HEK293 (cell line): ENCODE measurements at regions of chr17 and their contacts with region 1.

Region 1: DNA sequence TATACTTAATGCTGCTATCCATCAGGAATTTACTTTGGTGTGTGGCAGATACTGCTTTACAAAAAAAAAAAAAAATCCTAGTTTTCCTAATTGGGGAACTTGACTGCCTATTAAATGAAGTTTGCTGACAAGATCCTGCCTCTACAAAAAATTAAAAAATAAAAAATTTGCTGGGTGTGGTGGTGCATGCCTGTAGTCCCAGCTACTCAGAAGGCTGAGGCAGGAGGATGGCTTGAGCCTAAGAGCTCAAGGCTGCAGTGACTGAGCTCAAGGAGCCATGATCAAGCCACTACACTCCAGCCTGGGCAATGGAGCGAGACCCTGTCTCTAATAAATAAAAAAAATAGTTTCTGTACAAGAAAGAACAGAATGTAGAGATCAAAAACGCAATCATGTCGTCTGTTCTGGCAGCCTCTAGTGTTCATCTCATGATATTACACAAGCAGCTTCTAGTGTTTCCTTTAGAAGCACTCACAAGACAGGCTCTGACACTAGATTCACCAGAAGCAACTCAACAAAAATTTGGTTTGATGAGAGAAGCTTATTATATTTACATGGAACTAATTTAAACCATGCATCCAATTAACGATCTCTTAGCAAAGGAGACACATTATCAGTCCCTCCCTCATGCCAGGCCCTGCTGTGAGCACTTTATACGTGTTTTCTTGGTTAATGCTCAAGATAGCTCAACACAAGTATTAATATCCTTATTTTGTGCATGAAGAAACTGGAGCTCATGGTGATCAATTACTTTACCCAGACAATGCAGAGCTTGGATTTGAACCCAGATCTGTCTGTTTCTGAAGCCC is 6.8 kb upstream of the KRTAP17-1 start:
- H3K4me3 ChIP-seq: no peak overlapping the region
- H3K27ac ChIP-seq: no peak overlapping the region
- H3K4me1 ChIP-seq: no peaks in the 10 kb centered on the region
- CTCF ChIP-seq: no peak; the same call in 1 of the 2 replicates

Region 2: DNA sequence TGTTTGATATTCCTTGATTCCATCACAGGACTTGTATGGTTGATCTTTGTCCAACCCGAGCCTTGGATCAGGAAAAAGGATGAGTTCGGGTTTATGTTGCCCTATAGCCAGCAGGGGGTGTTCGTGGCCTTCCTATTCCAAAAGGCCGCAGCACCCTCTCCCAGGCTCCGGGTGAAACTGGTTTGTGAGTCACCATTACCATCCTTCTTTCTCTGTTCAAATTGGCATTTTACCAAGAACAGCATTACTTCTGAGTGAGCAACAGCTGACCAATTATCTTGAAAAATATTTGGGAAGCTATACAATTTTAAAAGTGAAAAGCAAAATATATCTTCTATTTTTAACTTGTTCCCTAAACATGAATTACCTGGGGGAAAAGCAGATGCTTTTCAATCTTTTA is 412.9 kb before region 1 on chr17:
- CTCF ChIA-PET with region 1: interaction called, 19 read pairs
- POLR2A ChIA-PET with region 1: no interaction called
- H3K4me3 ChIP-seq: no peak overlapping the region
- H3K27ac ChIP-seq: no peak overlapping the region
- H3K4me1 ChIP-seq: peaks cover 6% of the 10 kb centered on the region; the same call in 1 of the 2 replicates
- CTCF ChIP-seq: peak; percentile 45; the same call in 1 of the 2 replicates

Region 3: DNA sequence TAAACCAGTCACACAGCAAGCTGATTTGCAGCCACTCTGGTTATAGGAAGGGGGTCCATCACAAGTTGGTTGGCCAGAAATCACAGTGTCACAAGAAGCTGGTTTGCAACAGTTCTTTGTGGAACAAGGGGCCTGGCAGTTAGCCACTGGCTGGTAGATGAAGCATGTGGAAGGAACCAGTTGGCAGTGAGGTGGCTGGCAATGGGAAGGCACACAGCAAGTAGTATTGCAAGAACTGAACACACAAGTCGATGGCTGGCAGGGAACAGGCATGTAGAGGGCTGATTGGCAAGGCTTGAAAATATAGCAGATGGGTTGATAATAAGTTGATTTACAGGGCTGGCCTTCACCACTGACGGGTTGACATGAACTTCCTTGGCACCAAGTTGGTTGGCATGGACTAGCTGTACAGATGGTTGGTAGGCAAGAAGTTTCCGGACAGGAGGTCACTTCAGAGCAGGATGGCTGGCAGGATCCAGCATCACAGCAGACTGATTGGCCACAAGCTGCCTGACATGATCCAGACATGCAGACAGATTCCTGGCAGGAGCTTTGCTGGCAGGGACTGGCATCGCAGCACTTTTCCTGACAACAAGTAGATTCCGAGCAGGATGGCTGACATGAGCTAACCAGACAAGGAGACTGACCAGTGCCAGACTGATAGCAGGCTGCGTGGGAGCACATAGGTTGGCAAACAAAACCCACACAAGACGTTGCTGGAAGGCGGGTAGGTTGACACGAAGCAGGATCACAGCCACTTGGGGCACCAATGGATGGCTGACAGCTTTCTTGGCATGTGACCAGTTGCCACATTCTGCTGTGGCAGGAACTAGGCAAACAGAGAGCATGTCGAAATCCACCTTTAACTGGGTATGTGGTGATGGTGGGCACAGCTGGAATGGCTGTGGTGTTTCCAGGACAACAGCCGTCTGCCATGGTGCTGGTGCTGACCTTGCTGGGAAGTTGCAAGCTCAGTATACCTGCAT is 20.1 kb before region 1 on chr17 and contains the start of gene KRTAP29-1:
- CTCF ChIA-PET with region 1: interaction called, 27 read pairs
- POLR2A ChIA-PET with region 1: no interaction called
- H3K4me3 ChIP-seq: no peak within 1 kb of the TSS
- H3K27ac ChIP-seq: no peak within 1 kb of the TSS
- H3K4me1 ChIP-seq: no peaks in the 10 kb centered on the region
- CTCF ChIP-seq: no peak

Region 4: GRCh38 chr17:41334425-41334824 is 12.1 kb after region 1 on chr17:
- CTCF ChIA-PET with region 1: interaction called, 19 read pairs
- POLR2A ChIA-PET with region 1: no interaction called
- H3K4me3 ChIP-seq: no peak overlapping the region
- H3K27ac ChIP-seq: no peak overlapping the region
- H3K4me1 ChIP-seq: no peaks in the 10 kb centered on the region
- CTCF ChIP-seq: no peak

Region 5: GRCh38 chr17:41347869-41348773 is 25.8 kb after region 1 on chr17:
- CTCF ChIA-PET with region 1: interaction called, 16 read pairs
- POLR2A ChIA-PET with region 1: no interaction called
- H3K4me3 ChIP-seq: no peak overlapping the region
- H3K27ac ChIP-seq: no peak overlapping the region
- H3K4me1 ChIP-seq: no peaks in the 10 kb centered on the region
- CTCF ChIP-seq: no peak

Region 6: DNA sequence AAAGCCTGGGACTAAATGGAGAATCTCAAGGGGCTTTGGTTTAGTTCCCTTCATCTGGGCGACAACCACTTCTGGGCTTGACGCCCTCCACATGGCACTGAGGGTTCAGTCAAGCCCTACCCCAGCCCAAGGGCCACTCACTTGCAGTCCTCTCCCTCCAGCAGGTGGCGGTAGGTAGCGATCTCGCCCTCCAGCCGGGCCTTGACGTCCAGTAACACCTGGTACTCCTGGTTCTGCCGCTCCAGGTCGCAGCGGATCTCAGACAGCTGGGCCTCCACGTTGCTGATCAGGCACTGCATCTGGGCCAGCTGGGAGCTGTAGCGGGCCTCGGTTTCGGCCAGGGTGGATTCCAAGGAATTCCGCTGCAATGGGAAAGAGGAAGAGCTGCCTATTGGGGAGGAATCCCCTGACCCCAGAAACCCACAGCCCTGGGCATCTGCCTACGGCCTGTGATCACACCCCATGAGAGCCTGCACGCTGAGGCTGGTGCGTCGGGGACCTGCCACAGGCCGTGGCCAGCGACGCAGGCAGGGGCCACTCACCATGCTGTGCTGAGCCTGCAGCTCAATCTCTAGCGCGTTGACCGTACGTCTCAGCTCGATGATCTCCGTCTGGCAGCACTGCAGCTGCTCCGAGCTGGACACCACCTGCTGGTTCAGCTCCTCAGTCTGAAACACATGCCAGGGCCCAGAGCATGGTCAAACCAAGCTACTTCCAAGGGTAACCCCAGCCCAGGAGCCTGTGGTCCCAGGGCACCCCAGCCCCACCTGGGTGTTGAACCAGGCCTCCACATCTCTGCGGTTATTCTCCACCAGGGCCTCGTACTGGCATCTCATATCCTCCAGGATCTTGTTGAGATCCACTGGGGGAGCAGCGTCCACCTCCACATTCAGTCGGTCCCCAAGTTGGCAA is 164.8 kb after region 1 on chr17:
- CTCF ChIA-PET with region 1: interaction called, 12 read pairs
- POLR2A ChIA-PET with region 1: no interaction called
- H3K4me3 ChIP-seq: no peak overlapping the region
- H3K27ac ChIP-seq: no peak overlapping the region
- H3K4me1 ChIP-seq: no peaks in the 10 kb centered on the region
- CTCF ChIP-seq: 0 out of 2 replicates have a peak, but pooled peaks have one; percentile 17